Naive thymus-derived CD4-positive, alpha-beta T cell (primary cell): ENCODE measurements at regions of chr14 and their contacts with region 1.

Region 1: GRCh38 chr14:23301288-23301968 is 1.2 kb downstream of the PPP1R3E start:
- DNase-seq: peak; percentile 93 to 99 (median 98)
- ATAC-seq: peak; percentile 86
- H3K4me3 ChIP-seq: peak overlapping the region; percentile 98
- H3K4me3 Mint-ChIP-seq: peak overlapping the region; percentile 89 to 100 (median 98)
- H3K27ac ChIP-seq: peak overlapping the region; percentile 95
- H3K27ac Mint-ChIP-seq: peak overlapping the region; percentile 92 to 99 (median 97)
- H3K4me1 ChIP-seq: peaks cover 0 to 15% of the 10 kb centered on the region in 2 donors
- H3K4me1 Mint-ChIP-seq: peaks cover 7 to 41% (median 26%) of the 10 kb centered on the region in 7 donors
- H3K27me3 ChIP-seq: no peaks in the 10 kb centered on the region
- H3K27me3 Mint-ChIP-seq: peaks cover 8 to 15% (median 12%) of the 10 kb centered on the region in 5 donors

Region 2: DNA sequence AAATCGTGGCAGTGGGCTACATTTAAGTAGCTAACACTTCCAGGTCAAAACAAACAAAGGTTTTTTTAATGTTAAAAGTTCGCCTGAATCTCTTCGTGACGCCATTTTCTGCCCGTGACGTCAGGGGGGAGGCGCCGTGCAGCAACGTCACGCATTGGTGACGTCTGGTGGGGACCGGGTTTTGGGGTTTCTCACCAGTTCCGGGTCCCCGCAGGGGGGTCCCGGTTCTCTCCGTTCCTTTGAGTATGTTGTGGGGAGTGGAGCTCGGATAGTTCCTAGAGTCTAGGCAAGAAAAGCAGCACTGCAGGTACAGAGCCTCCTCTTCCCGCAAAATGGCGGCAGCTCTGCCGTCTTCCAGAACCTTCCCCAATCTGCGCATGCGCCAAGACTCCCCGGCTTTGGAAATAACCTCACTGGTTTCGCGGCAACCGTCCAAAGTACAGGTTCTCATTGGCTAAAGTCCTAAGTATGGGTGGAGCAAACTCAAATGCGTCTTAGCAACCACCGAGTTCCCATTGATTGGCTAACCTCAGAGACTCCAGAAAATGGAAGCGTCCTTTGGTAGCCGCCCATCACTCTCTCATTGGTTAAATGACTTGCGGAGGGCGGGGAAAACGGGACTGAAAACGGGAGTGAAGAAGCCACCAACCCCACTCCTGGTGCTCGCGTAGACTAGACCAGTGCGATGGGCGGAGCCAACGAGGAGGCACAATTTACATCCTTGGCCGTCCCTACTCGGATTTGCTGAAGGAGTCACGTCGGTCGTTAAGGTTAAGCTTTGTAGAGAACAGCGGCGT is 382.4 kb before region 1 on chr14 and contains the start of gene RBM23:
- CTCF ChIA-PET with region 1: no interaction called
- POLR2A ChIA-PET with region 1: no interaction called
- intact Hi-C with region 1: loop called in 1 of 2 experiments (anchors 1 kb)
- DNase-seq: peak; percentile 98 to 100 (median 100)
- ATAC-seq: peak; percentile 92
- H3K4me3 ChIP-seq: peak within 1 kb of the TSS; percentile 96
- H3K4me3 Mint-ChIP-seq: peak within 1 kb of the TSS; percentile 93 to 100 (median 97)
- H3K27ac ChIP-seq: peak within 1 kb of the TSS; percentile 98
- H3K27ac Mint-ChIP-seq: peak within 1 kb of the TSS; percentile 100
- H3K4me1 ChIP-seq: peaks cover 0 to 19% of the 10 kb centered on the region in 2 donors
- H3K4me1 Mint-ChIP-seq: peaks cover 18 to 56% (median 49%) of the 10 kb centered on the region in 7 donors
- H3K27me3 ChIP-seq: no peaks in the 10 kb centered on the region
- H3K27me3 Mint-ChIP-seq: peaks cover 0 to 4% (median 0%) of the 10 kb centered on the region in 5 donors
- total RNA-seq, gene RBM23: 91.9 to 140 (median 99.1) TPM

Region 3: GRCh38 chr14:23034483-23035302 is 266.7 kb before region 1 on chr14 and contains the start of gene PSMB5:
- CTCF ChIA-PET with region 1: no interaction called
- POLR2A ChIA-PET with region 1: no interaction called
- intact Hi-C with region 1: loop called in 1 of 2 experiments (anchors 1 kb)
- DNase-seq: peak; percentile 63 to 94 (median 91)
- ATAC-seq: peak; percentile 95
- H3K4me3 ChIP-seq: peak within 1 kb of the TSS; percentile 79
- H3K4me3 Mint-ChIP-seq: peak within 1 kb of the TSS; percentile 87 to 96 (median 92)
- H3K27ac ChIP-seq: peak within 1 kb of the TSS; percentile 83
- H3K27ac Mint-ChIP-seq: peak within 1 kb of the TSS; percentile 93 to 99 (median 96)
- H3K4me1 ChIP-seq: peaks cover 9 to 17% of the 10 kb centered on the region in 2 donors
- H3K4me1 Mint-ChIP-seq: peaks cover 22 to 43% (median 29%) of the 10 kb centered on the region in 7 donors
- H3K27me3 ChIP-seq: no peaks in the 10 kb centered on the region
- H3K27me3 Mint-ChIP-seq: no peaks in the 10 kb centered on the region
- total RNA-seq, gene PSMB5: 19.2 to 69.1 (median 32.8) TPM

Region 4: DNA sequence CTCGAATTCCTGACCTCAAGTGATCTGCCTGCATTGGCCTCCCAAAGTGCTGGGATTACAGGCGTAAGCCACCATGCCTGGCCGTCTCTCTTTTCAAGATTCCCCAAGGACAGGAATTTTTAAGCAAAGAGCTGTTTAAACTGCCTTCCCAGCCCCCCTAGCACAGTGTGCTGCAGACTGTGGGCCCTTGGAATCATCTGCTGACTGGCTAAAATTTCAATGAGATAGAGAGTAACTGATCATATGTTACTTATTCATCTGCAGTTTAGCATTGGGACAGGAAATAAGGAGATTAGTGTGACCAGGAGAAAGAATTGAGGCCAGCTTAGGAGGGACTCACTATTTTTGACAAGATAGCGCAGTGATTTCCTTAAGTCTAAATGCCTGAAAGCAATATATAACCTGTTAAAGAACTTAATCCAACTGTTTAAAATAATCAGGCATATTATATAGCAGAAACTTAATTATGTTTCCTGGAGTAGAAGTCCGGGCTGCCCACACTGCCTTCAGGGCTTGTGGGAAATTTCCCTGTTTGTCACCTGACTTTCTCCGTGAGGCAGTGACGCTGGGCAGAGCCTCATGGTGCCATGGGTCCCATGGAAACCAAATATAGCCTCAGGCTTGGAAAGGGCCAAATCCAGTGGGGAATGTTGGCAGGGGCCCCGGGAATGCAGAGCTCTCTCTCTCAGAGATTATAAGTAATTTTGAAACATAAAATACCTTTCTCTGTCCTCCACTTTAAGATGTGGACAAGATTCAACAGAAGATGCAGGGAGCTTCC is 159.6 kb before region 1 on chr14:
- CTCF ChIA-PET with region 1: no interaction called
- POLR2A ChIA-PET with region 1: no interaction called
- intact Hi-C with region 1: no loop called
- DNase-seq: no peak
- ATAC-seq: no peak
- H3K4me3 ChIP-seq: no peak overlapping the region
- H3K4me3 Mint-ChIP-seq: no peak overlapping the region
- H3K27ac ChIP-seq: no peak overlapping the region
- H3K27ac Mint-ChIP-seq: no peak overlapping the region
- H3K4me1 ChIP-seq: no peaks in the 10 kb centered on the region
- H3K4me1 Mint-ChIP-seq: peaks cover 0 to 4% (median 0%) of the 10 kb centered on the region in 7 donors
- H3K27me3 ChIP-seq: no peaks in the 10 kb centered on the region
- H3K27me3 Mint-ChIP-seq: peaks cover 0 to 18% (median 6%) of the 10 kb centered on the region in 5 donors

Region 5: GRCh38 chr14:23167116-23167847 is 134.1 kb before region 1 on chr14:
- CTCF ChIA-PET with region 1: no interaction called
- POLR2A ChIA-PET with region 1: no interaction called
- intact Hi-C with region 1: no loop called
- DNase-seq: no peak
- ATAC-seq: no peak
- H3K4me3 ChIP-seq: no peak overlapping the region
- H3K4me3 Mint-ChIP-seq: no peak overlapping the region
- H3K27ac ChIP-seq: no peak overlapping the region
- H3K27ac Mint-ChIP-seq: no peak overlapping the region
- H3K4me1 ChIP-seq: peaks cover 0 to 15% of the 10 kb centered on the region in 2 donors
- H3K4me1 Mint-ChIP-seq: peaks cover 2 to 68% (median 30%) of the 10 kb centered on the region in 7 donors
- H3K27me3 ChIP-seq: peaks cover 0 to 3% of the 10 kb centered on the region in 2 donors
- H3K27me3 Mint-ChIP-seq: peaks cover 0 to 12% (median 0%) of the 10 kb centered on the region in 5 donors

Region 6: DNA sequence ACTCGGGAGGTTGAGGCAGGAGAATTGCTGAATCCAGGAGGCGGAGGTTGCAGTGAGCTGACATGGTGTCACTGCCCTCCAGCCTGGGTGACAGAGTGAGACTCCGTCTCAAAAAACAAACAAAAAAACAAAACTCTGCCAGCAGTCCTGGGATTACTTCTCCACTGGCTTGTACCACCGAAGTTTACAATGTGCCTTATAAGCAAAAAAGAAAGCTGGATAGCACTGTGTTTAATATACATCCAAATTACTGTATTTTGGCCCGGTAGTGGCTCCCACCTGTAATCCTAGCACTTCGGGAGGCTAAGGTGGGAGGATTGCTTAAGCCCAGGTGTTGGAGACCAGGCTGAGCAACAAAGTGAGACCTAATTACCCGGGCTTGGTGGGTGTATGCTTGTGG is 32.2 kb before region 1 on chr14:
- CTCF ChIA-PET with region 1: interaction called, 4 read pairs
- POLR2A ChIA-PET with region 1: interaction called, 5 read pairs
- intact Hi-C with region 1: loop called (anchors 1 kb)
- DNase-seq: no peak
- ATAC-seq: no peak
- H3K4me3 ChIP-seq: no peak overlapping the region
- H3K4me3 Mint-ChIP-seq: no peak overlapping the region
- H3K27ac ChIP-seq: no peak overlapping the region
- H3K27ac Mint-ChIP-seq: no peak overlapping the region
- H3K4me1 ChIP-seq: no peaks in the 10 kb centered on the region
- H3K4me1 Mint-ChIP-seq: no peaks in the 10 kb centered on the region
- H3K27me3 ChIP-seq: peaks cover 0 to 4% of the 10 kb centered on the region in 2 donors
- H3K27me3 Mint-ChIP-seq: peaks cover 0 to 18% (median 12%) of the 10 kb centered on the region in 5 donors

Region 7: GRCh38 chr14:23379366-23380196 is 78.2 kb after region 1 on chr14:
- CTCF ChIA-PET with region 1: interaction called, 3 read pairs
- POLR2A ChIA-PET with region 1: interaction called, 3 read pairs
- intact Hi-C with region 1: loop called (anchors 1 kb)
- DNase-seq: peak; percentile 48 to 77 (median 68)
- ATAC-seq: peak; percentile 86
- H3K4me3 ChIP-seq: no peak overlapping the region
- H3K4me3 Mint-ChIP-seq: no peak overlapping the region
- H3K27ac ChIP-seq: no peak overlapping the region
- H3K27ac Mint-ChIP-seq: no peak overlapping the region
- H3K4me1 ChIP-seq: no peaks in the 10 kb centered on the region
- H3K4me1 Mint-ChIP-seq: peaks cover 0 to 3% (median 0%) of the 10 kb centered on the region in 7 donors
- H3K27me3 ChIP-seq: no peaks in the 10 kb centered on the region
- H3K27me3 Mint-ChIP-seq: peaks cover 0 to 16% (median 0%) of the 10 kb centered on the region in 5 donors

Region 8: GRCh38 chr14:24215495-24216344 is 914.3 kb after region 1 on chr14 and contains the start of gene MDP1:
- CTCF ChIA-PET with region 1: no interaction called
- POLR2A ChIA-PET with region 1: interaction called, 3 read pairs
- intact Hi-C with region 1: loop called in 1 of 2 experiments (anchors 10 kb)
- DNase-seq: peak; percentile 75 to 89 (median 84)
- ATAC-seq: peak; percentile 85
- H3K4me3 ChIP-seq: peak within 1 kb of the TSS; percentile 95
- H3K4me3 Mint-ChIP-seq: peak within 1 kb of the TSS; percentile 89 to 97 (median 95)
- H3K27ac ChIP-seq: peak within 1 kb of the TSS; percentile 91
- H3K27ac Mint-ChIP-seq: peak within 1 kb of the TSS; percentile 80 to 99 (median 96)
- H3K4me1 ChIP-seq: peaks cover 31 to 36% of the 10 kb centered on the region in 2 donors
- H3K4me1 Mint-ChIP-seq: peaks cover 29 to 62% (median 54%) of the 10 kb centered on the region in 7 donors
- H3K27me3 ChIP-seq: no peaks in the 10 kb centered on the region
- H3K27me3 Mint-ChIP-seq: peaks cover 0 to 2% (median 0%) of the 10 kb centered on the region in 5 donors
- total RNA-seq, gene MDP1: 5.5 to 18.5 (median 14.2) TPM